Right ventricle myocardium superior (tissue), 1 donor: ENCODE measurements at regions of chr2 and their contacts with region 1.

Region 1: GRCh38 chr2:43484323-43484930 is 111.4 kb downstream of the THADA start:
- DNase-seq: no peak
- ATAC-seq: peak; percentile 77

Region 2: GRCh38 chr2:42828487-42829425 is 655.7 kb before region 1 on chr2:
- intact Hi-C with region 1: loop called (anchors 10 kb)
- DNase-seq: peak; percentile 87
- ATAC-seq: peak; percentile 95

Region 3: DNA sequence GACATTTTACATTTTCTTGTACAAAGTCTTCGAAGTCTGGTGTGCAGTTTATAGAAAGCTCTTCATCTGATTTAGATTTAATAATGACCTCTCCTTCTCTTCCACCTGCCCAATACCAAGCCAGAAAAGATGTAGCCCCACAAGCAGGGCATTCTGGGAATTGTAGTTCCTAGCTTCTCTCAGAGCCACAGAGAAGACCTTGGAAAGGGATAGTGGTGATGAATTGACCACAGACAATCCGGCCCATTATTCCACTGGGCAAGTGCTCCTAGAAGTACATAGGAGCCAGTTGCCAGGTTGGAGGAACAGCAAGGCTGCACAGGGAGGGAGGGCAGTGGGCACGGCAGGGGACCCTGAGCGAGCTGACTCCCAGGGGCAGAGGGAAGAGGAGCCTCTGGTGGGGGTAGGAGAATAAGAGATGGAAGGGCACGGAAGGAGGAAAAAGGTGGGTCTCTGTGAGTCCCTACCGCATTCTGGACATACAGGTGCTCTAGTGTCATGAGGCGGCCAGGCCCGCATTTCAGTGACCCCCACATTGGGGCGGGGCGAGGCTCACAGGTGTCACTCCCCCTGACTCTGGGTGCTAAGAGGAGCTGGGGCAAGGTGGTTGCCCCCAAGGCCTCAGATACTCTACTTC is 539.5 kb before region 1 on chr2:
- intact Hi-C with region 1: loop called (anchors 10 kb)
- DNase-seq: no peak
- ATAC-seq: no peak

Region 4: DNA sequence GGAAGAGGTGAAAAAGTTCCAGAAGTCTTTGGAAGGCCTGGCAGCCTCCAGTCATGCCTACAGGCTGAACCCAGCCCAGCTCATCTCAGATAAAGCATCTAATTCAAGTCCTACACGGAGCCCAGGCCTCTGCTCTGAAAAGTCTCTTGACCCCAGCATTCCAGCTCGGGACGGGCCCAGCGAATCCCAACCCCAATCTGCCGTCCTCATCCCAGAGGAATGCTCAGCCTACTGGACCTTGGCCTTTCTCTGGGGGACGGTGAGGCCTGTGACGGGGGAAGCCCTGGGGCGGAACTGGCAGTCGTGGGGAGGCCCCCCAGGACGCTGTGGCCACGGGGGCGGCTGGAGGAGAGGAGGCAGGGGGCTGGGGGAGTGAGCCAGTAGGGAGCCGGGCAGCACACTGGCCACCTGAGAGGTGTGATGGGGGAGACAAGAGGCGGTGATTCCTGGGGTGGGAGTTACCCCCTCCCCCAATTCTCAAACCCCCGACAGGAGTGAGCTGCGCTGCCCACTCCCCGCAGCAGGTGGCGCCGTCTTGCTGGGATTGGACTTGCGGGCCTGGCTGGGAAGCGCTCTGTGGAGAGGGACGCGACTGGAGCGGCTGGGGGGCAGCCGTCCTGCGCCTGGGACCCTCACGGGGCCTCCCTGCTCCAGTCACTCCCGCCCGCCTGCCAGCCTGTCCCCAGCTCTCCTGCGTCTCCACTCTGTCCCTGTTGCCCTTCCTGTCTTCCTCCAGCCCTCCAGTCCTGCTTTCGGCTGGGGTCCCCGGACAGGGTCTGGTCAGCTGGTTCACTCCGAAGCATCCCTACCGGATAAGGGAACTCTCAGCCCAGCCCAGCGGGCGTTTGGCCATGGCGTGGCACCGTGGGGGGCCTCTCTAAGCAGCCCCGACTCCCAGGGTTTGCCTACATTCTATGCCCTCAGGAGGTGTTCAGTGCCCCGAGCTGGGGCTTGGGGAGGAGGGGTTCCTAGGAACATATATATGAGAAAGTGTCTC is 509.4 kb before region 1 on chr2:
- intact Hi-C with region 1: loop called (anchors 10 kb)
- DNase-seq: peak; percentile 89
- ATAC-seq: peak; percentile 92

Region 5: GRCh38 chr2:43131024-43131889 is 353.2 kb before region 1 on chr2:
- intact Hi-C with region 1: loop called (anchors 10 kb)
- DNase-seq: peak; percentile 82
- ATAC-seq: peak; percentile 45

Region 6: GRCh38 chr2:43226558-43226954 is 257.9 kb before region 1 on chr2 and contains the start of gene ZFP36L2:
- intact Hi-C with region 1: loop called (anchors 2 kb)
- DNase-seq: peak; percentile 98
- ATAC-seq: peak; percentile 81
- total RNA-seq, gene ZFP36L2: 45.0 TPM

Region 7: GRCh38 chr2:43537137-43537536 is 52.7 kb after region 1 on chr2:
- intact Hi-C with region 1: loop called (anchors 5 kb)
- DNase-seq: no peak
- ATAC-seq: no peak